ENCODE measurements at regions of chr6 and their contacts with region 1.

Region 1: DNA sequence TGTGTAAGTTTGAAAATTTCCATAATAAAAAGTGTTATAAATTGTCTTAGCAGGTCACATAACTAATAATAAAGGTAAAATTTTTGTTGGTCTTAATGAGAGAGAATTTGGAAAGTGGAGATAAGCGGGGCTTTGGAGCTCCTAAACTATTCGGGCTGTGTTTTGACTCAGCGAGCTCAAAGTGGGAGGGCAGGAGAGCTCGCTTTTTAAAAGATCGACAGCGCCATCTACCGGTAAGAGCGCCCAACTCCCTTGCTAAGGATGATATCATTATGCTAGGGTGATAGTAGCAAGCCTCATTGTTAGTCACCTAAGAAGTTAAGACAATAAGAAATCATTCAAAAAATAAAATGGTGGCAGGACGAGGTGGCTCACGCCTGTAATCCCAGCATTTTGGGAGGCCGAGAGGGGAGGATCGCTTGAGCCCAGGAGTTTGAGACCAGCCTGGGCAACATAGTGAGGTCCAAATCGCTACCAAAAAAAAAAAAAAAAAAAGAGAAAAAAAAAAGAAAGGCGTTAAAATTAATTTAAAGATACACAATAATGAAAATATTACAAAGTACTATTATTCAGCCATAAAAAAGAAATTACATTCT is 24.8 kb downstream of the C6orf15 start:
- DNase-seq: peak; percentile 87 to 93 (median 88)
- ATAC-seq: peak; percentile 94
- H3K4me3 ChIP-seq: no peak overlapping the region
- H3K27ac ChIP-seq: no peak overlapping the region
- H3K4me1 ChIP-seq: peaks cover 8 to 20% of the 10 kb centered on the region in 2 experiments
- H3K27me3 ChIP-seq: no peaks in the 10 kb centered on the region; a peak in 1 of 5 replicates
- CTCF ChIP-seq: peak; percentile 80 to 93 (median 90)
- EP300 ChIP-seq: no peak
- POLR2A ChIP-seq: no peak
- RAD21 ChIP-seq: peak; percentile 83 to 88

Region 2: DNA sequence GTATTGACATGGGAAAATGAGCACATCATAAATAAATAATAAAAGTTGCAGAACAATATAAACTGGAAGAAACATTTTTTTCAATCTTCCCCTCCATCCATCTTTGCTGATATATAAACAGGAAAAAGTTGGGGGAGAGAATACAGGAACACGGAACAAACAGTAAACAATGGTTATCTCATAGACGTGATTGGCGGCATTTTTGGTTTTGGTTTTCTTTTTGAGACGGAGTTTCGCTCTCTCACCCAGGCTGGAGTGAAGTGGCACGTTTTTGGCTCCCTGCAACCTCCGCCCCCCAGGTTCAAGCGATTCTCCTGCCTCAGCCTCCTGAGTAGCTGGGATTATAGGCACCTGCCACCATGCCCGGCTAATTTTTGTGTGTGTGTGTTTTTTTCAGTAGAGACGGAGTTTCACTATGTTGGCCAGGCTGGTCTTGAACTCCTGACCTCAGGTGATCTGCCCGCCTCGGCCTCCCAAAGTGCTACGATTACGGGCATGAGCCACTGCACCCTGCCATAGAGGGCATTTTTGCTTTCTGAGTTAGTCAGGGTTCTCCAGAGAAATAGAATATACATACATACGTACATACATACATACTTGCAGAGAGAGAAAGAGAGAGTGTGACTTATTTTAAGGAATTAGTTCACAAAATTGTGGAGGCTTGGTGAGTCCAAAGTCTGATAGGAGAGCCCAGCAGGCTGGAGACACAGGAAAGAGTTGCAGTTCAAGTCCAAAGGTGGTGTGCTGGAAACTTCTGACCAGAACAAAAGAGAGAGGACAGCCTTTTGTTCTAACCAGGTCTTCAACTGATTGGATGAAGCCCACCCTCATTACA is 553.9 kb before region 1 on chr6:
- CTCF ChIA-PET with region 1: no interaction called
- POLR2A ChIA-PET with region 1: no interaction called
- in situ Hi-C with region 1: no loop called
- intact Hi-C with region 1: loop called (anchors 5 kb)
- DNase-seq: no peak
- ATAC-seq: no peak
- H3K4me3 ChIP-seq: no peak overlapping the region
- H3K27ac ChIP-seq: no peak overlapping the region
- H3K4me1 ChIP-seq: peaks cover 7 to 14% of the 10 kb centered on the region in 2 experiments; a peak in 4 of 5 replicates
- H3K27me3 ChIP-seq: no peaks in the 10 kb centered on the region
- CTCF ChIP-seq: no peak; a peak in 1 of 6 replicates
- EP300 ChIP-seq: no peak
- POLR2A ChIP-seq: no peak
- RAD21 ChIP-seq: no peak

Region 3: DNA sequence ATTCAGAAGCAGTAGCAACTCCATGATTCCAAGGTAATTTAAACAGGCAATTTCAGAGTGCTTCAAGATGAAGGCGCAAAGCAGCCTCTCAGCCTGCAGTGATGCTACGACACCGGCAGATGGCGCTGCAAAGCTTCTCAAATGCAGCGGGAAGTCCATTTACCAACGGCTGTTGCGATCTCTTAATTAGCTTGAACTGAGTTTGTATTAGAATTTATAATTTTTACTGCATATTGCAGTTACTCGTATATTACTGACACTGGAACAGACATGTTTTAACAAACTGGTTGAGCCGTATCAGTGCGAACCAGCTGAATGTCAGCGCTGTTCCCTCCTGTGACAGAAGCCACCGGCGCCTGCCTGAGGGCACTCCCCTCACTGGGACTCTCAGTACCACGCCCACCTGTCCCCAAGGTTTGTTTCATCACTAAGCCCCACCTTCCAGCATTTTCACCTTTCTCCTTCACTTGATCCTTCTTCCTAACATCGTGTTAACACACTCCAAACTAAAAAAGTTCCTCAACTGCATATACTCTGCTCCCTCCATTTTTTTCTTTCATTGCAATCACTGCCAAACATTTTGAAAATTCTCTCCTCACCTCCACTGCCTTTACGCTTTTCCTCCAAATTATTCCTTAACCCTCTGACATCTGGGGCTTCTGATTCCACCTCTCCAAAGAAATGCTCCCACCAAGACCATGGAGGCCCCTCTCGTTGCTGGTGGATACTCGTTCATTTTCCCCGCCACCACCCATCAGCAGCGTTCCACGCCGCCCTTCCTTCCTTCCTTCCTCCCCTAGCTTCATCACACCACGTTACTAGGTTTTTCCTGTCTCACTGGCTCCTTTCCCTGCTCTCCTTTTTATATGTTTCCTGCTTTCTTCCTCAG is 545.8 kb before region 1 on chr6:
- CTCF ChIA-PET with region 1: interaction called, 6 read pairs
- POLR2A ChIA-PET with region 1: no interaction called
- in situ Hi-C with region 1: no loop called
- intact Hi-C with region 1: loop called (anchors 2 kb)
- DNase-seq: peak; percentile 85 to 92 (median 90)
- ATAC-seq: peak; percentile 94
- H3K4me3 ChIP-seq: peak overlapping the region; percentile 32
- H3K27ac ChIP-seq: no peak overlapping the region
- H3K4me1 ChIP-seq: peaks cover 0 to 2% of the 10 kb centered on the region in 2 experiments; a peak in 2 of 5 replicates
- H3K27me3 ChIP-seq: no peaks in the 10 kb centered on the region
- CTCF ChIP-seq: peak; percentile 95 to 100 (median 98)
- EP300 ChIP-seq: no peak
- POLR2A ChIP-seq: peak; percentile 43
- RAD21 ChIP-seq: peak; percentile 87 to 91

Region 4: GRCh38 chr6:30672445-30673253 is 414.9 kb before region 1 on chr6 and contains the start of gene DHX16:
- CTCF ChIA-PET with region 1: no interaction called
- POLR2A ChIA-PET with region 1: no interaction called
- in situ Hi-C with region 1: loop called (anchors 10 kb)
- intact Hi-C with region 1: no loop called
- DNase-seq: peak; percentile 85 to 99 (median 90)
- ATAC-seq: peak; percentile 89
- H3K4me3 ChIP-seq: peak within 1 kb of the TSS; percentile 83
- H3K27ac ChIP-seq: peak within 1 kb of the TSS; percentile 60
- H3K4me1 ChIP-seq: peaks cover 7 to 27% of the 10 kb centered on the region in 2 experiments
- H3K27me3 ChIP-seq: no peaks in the 10 kb centered on the region
- CTCF ChIP-seq: peak; percentile 85 to 98 (median 97)
- EP300 ChIP-seq: peak; percentile 58; the same call in 1 of the 2 replicates
- POLR2A ChIP-seq: peak; percentile 81
- RAD21 ChIP-seq: peak; percentile 76 to 77
- polyA plus RNA-seq, gene DHX16: 14.6 to 15.3 TPM

Region 5: GRCh38 chr6:30678964-30679726 is 408.4 kb before region 1 on chr6:
- CTCF ChIA-PET with region 1: no interaction called
- POLR2A ChIA-PET with region 1: no interaction called
- in situ Hi-C with region 1: loop called (anchors 10 kb)
- intact Hi-C with region 1: loop called (anchors 5 kb)
- DNase-seq: peak; percentile 81 to 95 (median 87)
- ATAC-seq: peak; percentile 79
- H3K4me3 ChIP-seq: peak overlapping the region; percentile 1; the same call in 1 of the 2 replicates
- H3K27ac ChIP-seq: no peak overlapping the region
- H3K4me1 ChIP-seq: peaks cover 29 to 48% of the 10 kb centered on the region in 2 experiments
- H3K27me3 ChIP-seq: no peaks in the 10 kb centered on the region
- CTCF ChIP-seq: peak; percentile 97 to 99 (median 98)
- EP300 ChIP-seq: peak; percentile 30; the same call in 1 of the 2 replicates
- POLR2A ChIP-seq: no peak
- RAD21 ChIP-seq: peak; percentile 98 to 99

Region 6: GRCh38 chr6:30730601-30731435 is 356.8 kb before region 1 on chr6:
- CTCF ChIA-PET with region 1: no interaction called
- POLR2A ChIA-PET with region 1: interaction called, 6 read pairs
- in situ Hi-C with region 1: no loop called
- intact Hi-C with region 1: loop called (anchors 5 kb)
- DNase-seq: peak; percentile 79 to 86 (median 84)
- ATAC-seq: peak; percentile 90
- H3K4me3 ChIP-seq: no peak overlapping the region
- H3K27ac ChIP-seq: 0 out of 3 replicates have a peak overlapping the region, but pooled peaks have one; percentile 18
- H3K4me1 ChIP-seq: peaks cover 0 to 7% of the 10 kb centered on the region in 2 experiments; a peak in 3 of 5 replicates
- H3K27me3 ChIP-seq: no peaks in the 10 kb centered on the region
- CTCF ChIP-seq: peak; percentile 88 to 95 (median 90)
- EP300 ChIP-seq: no peak
- POLR2A ChIP-seq: no peak; the same call in 1 of the 2 replicates
- RAD21 ChIP-seq: peak; percentile 69 to 90

Region 7: GRCh38 chr6:30828027-30828960 is 259.3 kb before region 1 on chr6:
- CTCF ChIA-PET with region 1: interaction called, 15 read pairs
- POLR2A ChIA-PET with region 1: interaction called, 4 read pairs
- in situ Hi-C with region 1: no loop called
- intact Hi-C with region 1: loop called (anchors 2 kb)
- DNase-seq: peak; percentile 92 to 95 (median 94)
- ATAC-seq: peak; percentile 97
- H3K4me3 ChIP-seq: no peak overlapping the region
- H3K27ac ChIP-seq: peak overlapping the region; percentile 76
- H3K4me1 ChIP-seq: peaks cover 11 to 23% of the 10 kb centered on the region in 2 experiments
- H3K27me3 ChIP-seq: no peaks in the 10 kb centered on the region
- CTCF ChIP-seq: peak; percentile 97 to 99 (median 99)
- EP300 ChIP-seq: peak; percentile 69
- POLR2A ChIP-seq: no peak
- RAD21 ChIP-seq: peak; percentile 100